Activated T-helper 1 cell treated with anti-CD3 and anti-CD28 coated beads, Interleukin-12 subunit alpha, Interleukin-12 subunit beta, Interleukin-2, Interleukin-4 antibody, amounts not matched to agents 30 ng/mL and 10 ng/mL and 1 ng/mL, durations not matched to agents 14 hours and 24 hours and 36 hours (primary cell): ENCODE measurements at regions of chr3 and their contacts with region 1.

Region 1: DNA sequence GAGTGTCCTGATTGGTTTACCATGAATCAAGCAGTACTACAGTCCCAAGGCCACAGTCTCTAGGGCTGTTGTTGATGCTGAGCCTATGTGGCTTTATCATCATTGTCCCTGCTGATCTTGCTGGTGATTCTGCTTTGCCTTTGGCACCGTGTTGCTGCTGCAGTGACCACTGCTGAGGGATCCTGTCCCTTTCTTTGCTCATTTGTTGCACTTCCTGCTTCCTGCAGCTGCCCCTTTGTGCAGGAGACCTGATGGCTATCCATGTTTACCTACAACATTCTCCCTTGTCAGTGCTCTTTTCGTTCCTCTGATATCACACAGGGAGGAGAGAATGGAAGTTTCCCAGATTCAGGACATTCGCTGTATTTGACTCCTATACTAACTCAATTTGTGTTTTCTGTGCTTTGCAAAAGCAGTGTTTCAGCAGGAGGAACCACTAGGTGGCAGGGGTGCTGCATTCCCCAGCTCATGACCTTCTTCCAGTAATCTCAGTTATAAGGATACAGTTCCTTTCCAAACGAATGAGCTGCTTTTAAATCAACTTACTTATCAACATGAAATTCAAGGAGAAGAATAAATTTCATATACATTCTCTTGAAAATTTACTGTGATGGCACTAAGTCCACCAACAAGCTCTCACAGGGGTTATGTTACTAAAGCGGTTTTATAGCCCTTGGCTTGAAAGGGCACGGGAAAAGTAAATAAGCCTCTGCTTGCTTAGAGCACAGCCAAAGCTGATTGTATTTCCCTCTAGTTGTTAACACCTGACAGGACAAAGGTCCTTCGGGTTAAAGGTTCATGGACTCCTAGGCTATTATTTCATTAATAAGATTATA is 9.7 kb upstream of the THUMPD3 start:
- DNase-seq: peak; percentile 39
- H3K4me3 Mint-ChIP-seq: no peak overlapping the region
- H3K27ac Mint-ChIP-seq: no peak overlapping the region
- H3K4me1 Mint-ChIP-seq: peaks cover 20% of the 10 kb centered on the region
- H3K27me3 Mint-ChIP-seq: no peaks in the 10 kb centered on the region

Region 2: DNA sequence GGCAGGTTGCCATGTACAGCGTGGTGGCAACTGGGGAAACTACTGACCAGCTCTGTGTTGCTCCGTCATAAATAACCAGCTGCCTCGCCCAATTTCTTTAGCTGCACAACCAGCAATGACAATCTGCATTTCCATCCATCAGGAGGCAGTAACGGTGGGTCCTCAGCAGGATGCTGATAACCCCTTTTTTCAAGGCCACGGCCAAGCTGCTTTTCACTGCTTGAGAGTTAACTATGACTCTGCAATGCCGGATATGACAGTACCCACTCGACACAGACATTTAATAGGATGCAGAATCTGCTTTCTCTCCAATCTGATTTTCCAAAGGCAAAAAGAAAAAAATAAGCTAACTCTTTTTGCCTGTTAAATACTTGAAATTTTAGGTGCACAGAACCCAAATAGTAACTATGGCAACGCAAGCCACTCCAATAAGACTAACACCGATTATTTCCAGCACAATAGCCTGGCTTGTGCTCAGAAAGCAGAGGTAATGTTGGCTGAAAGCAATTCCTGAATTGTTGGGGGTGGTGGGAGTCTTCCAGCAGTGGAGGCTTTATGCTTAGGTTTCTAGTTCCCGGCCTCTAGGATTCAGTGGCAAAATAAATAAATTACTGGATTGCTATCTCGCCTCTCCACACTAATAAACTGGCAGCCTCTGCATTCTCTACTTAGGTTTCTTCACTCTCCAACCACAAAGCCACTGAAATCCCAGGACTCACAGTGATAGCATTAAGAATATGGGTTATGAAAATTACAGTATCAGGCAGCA is 72.5 kb before region 1 on chr3:
- intact Hi-C with region 1: no loop called
- DNase-seq: no peak
- H3K4me3 Mint-ChIP-seq: no peak overlapping the region
- H3K27ac Mint-ChIP-seq: no peak overlapping the region
- H3K4me1 Mint-ChIP-seq: no peaks in the 10 kb centered on the region
- H3K27me3 Mint-ChIP-seq: peaks cover 3% of the 10 kb centered on the region

Region 3: GRCh38 chr3:9316881-9317361 is 36.2 kb before region 1 on chr3:
- intact Hi-C with region 1: no loop called
- DNase-seq: no peak
- H3K4me3 Mint-ChIP-seq: no peak overlapping the region
- H3K27ac Mint-ChIP-seq: no peak overlapping the region
- H3K4me1 Mint-ChIP-seq: no peaks in the 10 kb centered on the region
- H3K27me3 Mint-ChIP-seq: peaks cover 2% of the 10 kb centered on the region

Region 4: DNA sequence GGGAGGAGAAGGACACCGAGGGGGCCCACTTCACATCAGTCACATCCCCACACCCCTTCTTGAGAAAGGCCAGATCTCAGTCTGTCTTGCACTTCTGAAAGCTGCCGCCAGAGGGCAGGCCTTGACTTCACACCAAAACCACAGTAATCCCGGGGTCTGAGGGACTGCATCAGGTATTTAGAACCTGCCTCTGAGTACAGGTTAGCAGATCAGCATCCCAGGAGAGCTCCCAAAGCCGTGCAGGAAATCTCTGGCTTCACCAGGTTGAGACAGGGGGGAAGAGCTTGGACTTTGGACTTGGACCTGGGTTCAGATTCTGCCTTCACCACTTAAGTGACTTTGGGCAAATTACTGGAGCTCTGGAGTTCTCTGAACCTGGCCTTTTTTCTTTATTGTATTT is 150.1 kb after region 1 on chr3:
- intact Hi-C with region 1: loop called (anchors 1 kb)
- DNase-seq: peak; percentile 57
- H3K4me3 Mint-ChIP-seq: no peak overlapping the region
- H3K27ac Mint-ChIP-seq: no peak overlapping the region
- H3K4me1 Mint-ChIP-seq: no peaks in the 10 kb centered on the region
- H3K27me3 Mint-ChIP-seq: peaks cover 26% of the 10 kb centered on the region